ENCODE measurements at regions of chr9 and their contacts with region 1.

Region 1: GRCh38 chr9:89661956-89662717 is 57.3 kb downstream of the GADD45G start:
- DNase-seq: peak; percentile 98 to 99 (median 98)
- ATAC-seq: peak; percentile 95 to 98 (median 97)
- H3K4me3 ChIP-seq: peak overlapping the region in 10 of 12 donors; percentile 15 to 53 (median 44)
- H3K27ac ChIP-seq: peak overlapping the region; percentile 2 to 83 (median 77)
- H3K4me1 ChIP-seq: peaks cover 5 to 41% (median 18%) of the 10 kb centered on the region in 12 donors
- H3K27me3 ChIP-seq: no peaks in the 10 kb centered on the region
- CTCF ChIP-seq: no peak
- POLR2A ChIP-seq: no peak

Region 2: DNA sequence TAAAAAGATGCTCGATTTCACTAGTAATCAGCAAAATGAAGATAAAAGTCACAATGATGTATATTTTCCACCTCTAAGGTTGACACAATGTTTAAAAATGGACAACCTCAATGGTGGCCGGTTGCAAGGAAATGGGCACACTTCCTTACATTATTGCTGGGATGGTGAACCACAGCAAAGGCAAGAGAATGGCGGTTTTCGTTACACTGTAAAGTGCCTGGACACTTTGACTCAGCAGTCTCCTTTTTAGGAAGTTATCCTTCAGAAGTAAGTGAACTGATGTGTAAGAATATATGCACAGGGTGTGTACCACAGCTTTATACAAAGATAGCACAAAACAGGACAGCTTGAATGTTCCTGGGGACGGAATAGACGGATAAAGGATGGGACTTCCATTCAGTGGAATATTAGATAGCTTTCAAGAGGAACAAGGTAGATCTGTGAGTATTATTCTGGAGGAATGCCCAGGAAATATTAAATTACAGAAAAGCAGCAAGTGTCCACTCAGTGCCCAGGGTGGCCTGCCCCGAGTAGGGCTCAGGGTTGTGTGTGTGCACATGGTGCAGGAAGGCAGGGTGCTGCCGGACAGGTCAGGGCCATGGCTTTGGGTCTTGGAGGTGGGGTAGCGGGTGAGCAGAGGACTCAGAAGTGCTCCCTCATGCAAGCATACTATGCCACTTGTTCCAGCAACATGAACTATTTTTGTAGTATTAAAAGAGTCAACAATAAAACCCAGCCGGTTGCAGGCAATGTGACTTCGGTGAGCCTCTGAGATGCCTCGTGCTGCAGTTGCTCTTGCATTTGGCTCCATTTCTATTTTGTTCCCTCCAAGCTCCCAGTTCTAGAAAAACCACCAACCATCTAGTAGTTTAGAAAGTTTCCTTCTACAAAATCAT is 32.8 kb before region 1 on chr9:
- intact Hi-C with region 1: loop called in 1 of 10 experiments (anchors 5 kb)
- DNase-seq: no peak
- ATAC-seq: no peak
- H3K4me3 ChIP-seq: no peak overlapping the region
- H3K27ac ChIP-seq: no peak overlapping the region
- H3K4me1 ChIP-seq: peaks cover 0 to 8% (median 0%) of the 10 kb centered on the region in 12 donors
- H3K27me3 ChIP-seq: no peaks in the 10 kb centered on the region
- CTCF ChIP-seq: no peak
- POLR2A ChIP-seq: no peak

Region 3: DNA sequence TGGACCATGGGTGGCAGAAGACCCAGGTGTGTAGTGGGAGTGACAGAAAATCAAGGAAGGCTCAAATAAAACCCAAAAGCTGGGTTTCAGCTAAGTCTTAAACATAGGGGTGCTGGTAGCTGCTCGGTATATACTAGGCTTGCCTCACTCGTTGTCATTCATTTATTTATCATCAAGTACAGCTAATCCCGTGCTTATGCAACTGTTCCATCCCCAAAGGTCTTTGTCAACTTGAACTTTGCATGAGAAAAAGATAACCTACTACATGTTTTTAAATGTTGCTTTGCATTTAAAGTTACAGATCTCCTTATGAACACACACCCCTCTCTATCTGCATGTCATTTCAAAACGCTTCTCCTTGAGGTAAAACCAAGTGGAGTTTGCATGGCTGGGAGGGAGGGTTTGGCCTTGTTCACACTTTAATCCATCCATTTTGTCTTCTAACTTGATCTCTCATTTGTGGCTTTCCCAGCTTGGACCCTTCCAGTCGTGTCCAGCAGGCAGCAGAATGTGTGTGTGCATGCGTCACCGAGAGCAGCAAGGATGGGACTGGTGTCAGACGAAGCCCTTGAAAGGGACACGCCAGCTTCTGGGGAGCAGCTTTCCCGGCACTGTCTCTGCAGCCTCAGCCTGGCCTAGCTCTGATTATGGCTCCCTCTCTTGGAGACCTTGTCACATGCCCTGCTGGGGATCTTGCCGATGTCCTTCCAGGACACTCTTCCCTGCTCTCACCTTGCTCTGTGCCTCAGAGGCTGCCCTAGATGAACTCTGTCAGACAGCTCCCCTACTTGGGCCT is 76.2 kb after region 1 on chr9:
- intact Hi-C with region 1: loop called in 1 of 10 experiments (anchors 2 kb)
- DNase-seq: no peak
- ATAC-seq: peak; percentile 40 to 62 (median 46)
- H3K4me3 ChIP-seq: no peak overlapping the region
- H3K27ac ChIP-seq: no peak overlapping the region
- H3K4me1 ChIP-seq: peaks cover 0 to 31% (median under 1%) of the 10 kb centered on the region in 12 donors
- H3K27me3 ChIP-seq: no peaks in the 10 kb centered on the region
- CTCF ChIP-seq: peak in 5 of 12 donors; percentile 11 to 20 (median 13)
- POLR2A ChIP-seq: no peak